ENCODE measurements at regions of chr4 and their contacts with region 1.

Region 1: GRCh38 chr4:15001869-15002658 is at the start of gene CPEB2:
- DNase-seq: peak; percentile 91
- H3K4me3 Mint-ChIP-seq: peak within 1 kb of the TSS; percentile 88
- H3K27ac Mint-ChIP-seq: peak within 1 kb of the TSS; percentile 94
- H3K4me1 Mint-ChIP-seq: peaks cover 12% of the 10 kb centered on the region
- H3K27me3 Mint-ChIP-seq: no peaks in the 10 kb centered on the region
- total RNA-seq, gene CPEB2: 4.4 to 5.4 TPM

Region 2: DNA sequence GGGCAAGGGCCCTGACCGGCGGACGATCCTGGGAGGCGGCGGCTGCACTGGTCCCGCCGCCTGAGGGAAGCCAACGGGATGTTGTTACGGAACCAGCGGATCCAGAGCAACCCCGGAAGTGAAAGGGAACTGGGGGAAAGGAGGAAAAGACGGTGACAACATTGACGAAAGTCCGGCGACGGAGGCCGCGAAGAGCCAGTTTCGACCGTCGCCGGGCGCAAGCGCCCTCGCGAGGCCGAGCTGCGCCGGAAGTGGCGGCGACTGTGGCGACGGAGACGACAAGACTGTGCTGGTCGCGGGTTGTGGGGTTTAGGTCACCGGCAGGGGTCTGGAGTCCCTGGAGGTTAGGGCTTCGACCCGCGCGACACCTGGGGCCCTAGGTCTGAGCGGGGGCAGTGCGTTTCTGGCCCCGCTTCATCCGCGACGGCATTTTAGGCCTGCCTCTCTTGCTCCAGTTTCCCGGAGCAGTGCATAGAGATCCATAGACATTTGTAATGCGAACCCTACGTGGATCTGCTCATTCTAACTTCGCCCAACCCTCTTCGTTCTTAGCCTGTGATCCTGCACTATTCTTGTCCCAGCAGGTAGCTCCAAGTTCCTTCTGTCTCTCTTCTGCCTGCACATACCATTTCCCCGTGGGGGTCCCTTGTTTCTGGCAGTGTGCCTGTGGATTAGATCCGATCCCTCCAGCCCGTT is 1374.3 kb before region 1 on chr4 and contains the start of gene BOD1L1:
- CTCF ChIA-PET with region 1: no interaction called
- intact Hi-C with region 1: loop called (anchors 1 kb)
- DNase-seq: peak; percentile 84
- H3K4me3 Mint-ChIP-seq: peak within 1 kb of the TSS; percentile 95
- H3K27ac Mint-ChIP-seq: peak within 1 kb of the TSS; percentile 92
- H3K4me1 Mint-ChIP-seq: peaks cover 46% of the 10 kb centered on the region
- H3K27me3 Mint-ChIP-seq: no peaks in the 10 kb centered on the region
- total RNA-seq, gene BOD1L1: 24.2 to 24.3 TPM

Region 3: GRCh38 chr4:14841801-14842768 is 160.0 kb before region 1 on chr4:
- CTCF ChIA-PET with region 1: no interaction called
- intact Hi-C with region 1: loop called (anchors 5 kb)
- DNase-seq: no peak
- H3K4me3 Mint-ChIP-seq: no peak overlapping the region
- H3K27ac Mint-ChIP-seq: peak overlapping the region; percentile 65
- H3K4me1 Mint-ChIP-seq: peaks cover 13% of the 10 kb centered on the region
- H3K27me3 Mint-ChIP-seq: peaks cover 4% of the 10 kb centered on the region

Region 4: DNA sequence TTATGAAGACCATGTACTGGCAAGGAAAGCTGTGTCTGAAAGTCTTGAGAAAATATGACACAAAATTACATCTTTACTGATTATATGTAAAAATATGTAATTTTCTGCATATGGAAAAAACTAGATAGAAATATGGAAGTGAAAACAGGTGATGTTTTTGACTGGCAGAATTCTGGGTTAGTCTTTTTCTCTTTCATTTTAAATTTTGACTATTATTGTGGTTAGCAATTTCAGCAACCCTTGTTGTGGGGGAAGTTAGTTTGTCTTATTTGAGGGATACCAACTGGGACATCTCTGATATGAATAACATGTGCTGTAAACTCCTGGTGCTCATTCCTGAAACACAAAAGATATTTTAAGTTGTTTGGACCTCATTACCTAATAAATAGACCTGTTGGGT is 49.7 kb before region 1 on chr4:
- CTCF ChIA-PET with region 1: no interaction called
- intact Hi-C with region 1: no loop called
- DNase-seq: no peak
- H3K4me3 Mint-ChIP-seq: no peak overlapping the region
- H3K27ac Mint-ChIP-seq: no peak overlapping the region
- H3K4me1 Mint-ChIP-seq: no peaks in the 10 kb centered on the region
- H3K27me3 Mint-ChIP-seq: peaks cover 6% of the 10 kb centered on the region

Region 5: DNA sequence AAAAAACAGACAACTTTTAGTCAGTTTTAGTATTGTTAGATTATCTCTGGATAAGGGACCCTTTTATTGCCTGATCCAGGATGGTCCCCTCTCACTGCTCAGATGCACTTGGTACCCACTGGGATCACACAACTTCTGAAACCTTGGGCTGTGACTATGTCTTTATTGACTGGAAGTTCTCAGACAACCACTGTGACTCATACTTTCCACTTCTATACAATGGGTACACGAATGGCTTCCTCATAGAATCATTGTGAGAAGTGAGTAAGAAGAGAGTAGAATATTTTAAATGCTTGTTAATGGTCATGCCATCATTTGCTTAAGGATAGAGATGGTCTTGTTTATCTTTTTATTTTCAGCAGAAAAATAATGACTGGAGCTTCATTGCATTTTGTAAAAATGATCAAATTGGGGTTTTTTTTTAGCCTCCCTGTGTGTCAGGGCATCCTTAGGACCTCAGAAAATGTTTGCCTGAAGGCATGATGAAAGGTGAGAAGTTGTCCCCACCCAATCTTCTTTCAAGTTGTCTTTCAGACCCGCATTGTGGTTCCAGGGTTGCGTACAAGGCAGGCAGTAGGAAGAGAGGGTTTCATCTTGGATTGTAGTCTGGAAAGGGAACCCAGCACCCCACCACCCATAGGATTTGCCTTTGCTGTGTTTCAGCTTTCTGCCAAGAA is 115.3 kb after region 1 on chr4:
- CTCF ChIA-PET with region 1: interaction called, 3 read pairs
- intact Hi-C with region 1: loop called (anchors 1 kb)
- DNase-seq: peak; percentile 13
- H3K4me3 Mint-ChIP-seq: no peak overlapping the region
- H3K27ac Mint-ChIP-seq: no peak overlapping the region
- H3K4me1 Mint-ChIP-seq: peaks cover 11% of the 10 kb centered on the region
- H3K27me3 Mint-ChIP-seq: peaks cover 24% of the 10 kb centered on the region

Region 6: GRCh38 chr4:15396157-15396800 is 394.2 kb after region 1 on chr4:
- CTCF ChIA-PET with region 1: no interaction called
- intact Hi-C with region 1: loop called (anchors 5 kb)
- DNase-seq: peak; percentile 79
- H3K4me3 Mint-ChIP-seq: no peak overlapping the region
- H3K27ac Mint-ChIP-seq: no peak overlapping the region
- H3K4me1 Mint-ChIP-seq: peaks cover 26% of the 10 kb centered on the region
- H3K27me3 Mint-ChIP-seq: no peaks in the 10 kb centered on the region

Region 7: GRCh38 chr4:15771216-15772058 is 769.4 kb after region 1 on chr4:
- CTCF ChIA-PET with region 1: no interaction called
- intact Hi-C with region 1: loop called (anchors 5 kb)
- DNase-seq: peak; percentile 57
- H3K4me3 Mint-ChIP-seq: peak overlapping the region; percentile 41
- H3K27ac Mint-ChIP-seq: no peak overlapping the region
- H3K4me1 Mint-ChIP-seq: peaks cover 69% of the 10 kb centered on the region
- H3K27me3 Mint-ChIP-seq: peaks cover 8% of the 10 kb centered on the region